IMR-90 (cell line): ENCODE measurements at regions of chr3 and their contacts with region 1.

Region 1: DNA sequence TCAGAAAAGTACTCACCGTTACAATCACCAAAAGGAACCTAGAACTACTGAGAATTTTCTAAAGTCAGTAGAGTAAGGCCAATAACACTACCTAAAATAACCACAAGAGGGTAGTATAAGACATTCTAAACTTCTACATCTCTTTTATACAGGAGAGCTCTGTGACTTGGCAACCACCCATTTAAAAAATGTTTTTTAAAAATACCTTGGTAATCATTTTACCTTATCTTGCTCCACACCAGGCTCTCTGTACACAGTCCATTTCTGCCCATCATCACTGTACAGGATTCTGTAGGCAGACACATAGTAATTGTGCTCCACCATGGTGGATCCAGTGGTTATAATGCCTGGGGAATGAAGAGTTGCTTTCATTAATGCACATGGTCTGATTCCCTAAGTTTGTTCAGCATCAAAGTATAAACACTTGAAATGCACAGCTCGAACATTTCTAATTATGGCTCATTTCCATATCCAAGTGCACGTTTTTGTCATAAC is 54.5 kb downstream of the ST3GAL6 start:
- DNase-seq: peak; percentile 59
- ATAC-seq: peak; percentile 65
- H3K4me3 ChIP-seq: no peak overlapping the region
- H3K27ac ChIP-seq: no peak overlapping the region
- H3K4me1 ChIP-seq: peaks cover 4% of the 10 kb centered on the region
- H3K27me3 ChIP-seq: no peaks in the 10 kb centered on the region
- CTCF ChIP-seq: peak; percentile 69
- POLR2A ChIP-seq: no peak
- RAD21 ChIP-seq: peak; percentile 72

Region 2: GRCh38 chr3:98563661-98564281 is 253.8 kb before region 1 on chr3:
- CTCF ChIA-PET with region 1: no interaction called
- POLR2A ChIA-PET with region 1: no interaction called
- dilution Hi-C with region 1: no loop called
- in situ Hi-C with region 1: no loop called
- intact Hi-C with region 1: no loop called
- DNase-seq: peak; percentile 61
- ATAC-seq: peak; percentile 64
- H3K4me3 ChIP-seq: no peak overlapping the region
- H3K27ac ChIP-seq: no peak overlapping the region
- H3K4me1 ChIP-seq: no peaks in the 10 kb centered on the region; the same call in 1 of the 2 replicates
- H3K27me3 ChIP-seq: no peaks in the 10 kb centered on the region; the same call in 1 of the 2 replicates
- CTCF ChIP-seq: no peak
- POLR2A ChIP-seq: no peak
- RAD21 ChIP-seq: no peak

Region 3: GRCh38 chr3:98593046-98593936 is 224.3 kb before region 1 on chr3 and contains the start of gene CPOX:
- CTCF ChIA-PET with region 1: interaction called, 9 read pairs
- POLR2A ChIA-PET with region 1: no interaction called
- dilution Hi-C with region 1: no loop called
- in situ Hi-C with region 1: no loop called
- intact Hi-C with region 1: loop called (anchors 1 kb)
- DNase-seq: peak; percentile 88
- ATAC-seq: peak; percentile 98
- H3K4me3 ChIP-seq: peak within 1 kb of the TSS; percentile 81
- H3K27ac ChIP-seq: peak within 1 kb of the TSS; percentile 65
- H3K4me1 ChIP-seq: peaks cover 2% of the 10 kb centered on the region; the same call in 1 of the 2 replicates
- H3K27me3 ChIP-seq: no peaks in the 10 kb centered on the region
- CTCF ChIP-seq: no peak
- POLR2A ChIP-seq: no peak
- RAD21 ChIP-seq: no peak
- total RNA-seq, gene CPOX: 14.5 and 20.3 TPM in 2 replicates